HepG2 (cell line): ENCODE measurements at regions of chr14 and their contacts with region 1.

Region 1: GRCh38 chr14:91418387-91419043 is 895 bp upstream of the CCDC88C start:
- DNase-seq: peak; percentile 38
- ATAC-seq: peak; percentile 52
- H3K4me3 ChIP-seq: peak overlapping the region; percentile 27 to 78 (median 55)
- H3K27ac ChIP-seq: peak overlapping the region; percentile 62
- H3K4me1 ChIP-seq: peaks cover 64% of the 10 kb centered on the region
- H3K27me3 ChIP-seq: no peaks in the 10 kb centered on the region
- CTCF ChIP-seq: peak; percentile 90
- EP300 ChIP-seq: no peak
- POLR2A ChIP-seq: 0 out of 4 replicates have a peak, but pooled peaks of 1 of the 2 experiments have one; percentile 12
- RAD21 ChIP-seq: peak; percentile 83

Region 2: DNA sequence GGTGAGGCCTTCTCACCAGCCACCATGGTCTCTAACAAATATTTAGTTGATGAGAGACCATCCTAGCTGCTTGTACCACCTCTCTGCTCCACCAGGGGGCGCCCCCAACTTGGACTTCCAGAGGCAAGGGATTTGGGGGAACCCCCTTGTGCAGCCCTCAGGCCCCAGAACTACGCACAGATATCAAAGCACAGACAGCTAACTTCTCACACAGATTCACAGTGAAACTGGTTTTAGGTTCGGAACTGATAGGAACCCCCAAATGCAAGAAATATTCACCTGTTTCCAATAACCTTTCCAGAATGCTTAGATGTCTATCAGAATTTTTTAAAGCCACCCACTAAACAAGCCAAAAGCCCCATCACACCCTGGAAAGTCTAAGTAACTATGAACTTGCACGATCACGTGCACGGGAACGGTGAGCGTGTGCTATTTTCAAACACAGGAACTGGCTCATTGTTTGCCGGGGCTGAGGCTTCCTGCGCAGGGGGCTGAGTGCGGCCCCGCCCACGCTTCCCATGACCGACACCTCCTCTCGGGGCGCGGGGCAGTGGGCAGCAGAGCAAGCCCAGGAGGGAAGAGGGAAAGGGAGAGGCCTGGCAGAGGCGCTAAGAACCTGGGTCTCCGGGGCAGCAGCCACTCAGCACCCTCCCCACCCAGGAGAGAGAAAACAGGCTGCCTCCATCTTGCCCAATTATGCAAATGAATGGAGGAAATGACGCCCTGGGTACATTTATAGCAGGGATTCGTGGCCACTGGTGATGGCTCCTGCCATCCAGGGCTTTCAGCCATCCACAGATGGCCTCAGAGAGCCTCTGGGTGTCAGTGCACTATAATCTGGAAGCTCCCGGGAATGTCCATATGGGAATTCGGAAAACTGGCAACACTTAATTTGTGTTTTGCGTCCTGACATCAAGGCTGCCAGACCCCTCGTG is 94.6 kb before region 1 on chr14:
- CTCF ChIA-PET with region 1: interaction called, 39 read pairs
- POLR2A ChIA-PET with region 1: interaction called, 4 read pairs
- in situ Hi-C with region 1: loop called (anchors 5 kb)
- intact Hi-C with region 1: loop called (anchors 1 kb)
- DNase-seq: peak; percentile 45
- ATAC-seq: peak; percentile 71
- H3K4me3 ChIP-seq: no peak overlapping the region
- H3K27ac ChIP-seq: no peak overlapping the region
- H3K4me1 ChIP-seq: no peaks in the 10 kb centered on the region
- H3K27me3 ChIP-seq: no peaks in the 10 kb centered on the region
- CTCF ChIP-seq: peak; percentile 91
- EP300 ChIP-seq: no peak
- POLR2A ChIP-seq: no peak
- RAD21 ChIP-seq: peak; percentile 70

Region 3: GRCh38 chr14:91361233-91362063 is 57.1 kb before region 1 on chr14:
- CTCF ChIA-PET with region 1: no interaction called
- POLR2A ChIA-PET with region 1: interaction called, 3 read pairs
- in situ Hi-C with region 1: no loop called
- intact Hi-C with region 1: loop called (anchors 2 kb)
- DNase-seq: peak; percentile 61
- ATAC-seq: peak; percentile 75
- H3K4me3 ChIP-seq: peak overlapping the region in 1 of 3 experiments; percentile 53; a peak in 2 of 6 replicates
- H3K27ac ChIP-seq: peak overlapping the region; percentile 39
- H3K4me1 ChIP-seq: peaks cover 43% of the 10 kb centered on the region
- H3K27me3 ChIP-seq: no peaks in the 10 kb centered on the region
- CTCF ChIP-seq: no peak
- EP300 ChIP-seq: no peak
- POLR2A ChIP-seq: no peak
- RAD21 ChIP-seq: no peak

Region 4: GRCh38 chr14:91380610-91381371 is 37.7 kb before region 1 on chr14:
- CTCF ChIA-PET with region 1: no interaction called
- POLR2A ChIA-PET with region 1: no interaction called
- in situ Hi-C with region 1: no loop called
- intact Hi-C with region 1: loop called (anchors 2 kb)
- DNase-seq: no peak
- ATAC-seq: no peak
- H3K4me3 ChIP-seq: no peak overlapping the region
- H3K27ac ChIP-seq: no peak overlapping the region
- H3K4me1 ChIP-seq: peaks cover 25% of the 10 kb centered on the region
- H3K27me3 ChIP-seq: no peaks in the 10 kb centered on the region
- CTCF ChIP-seq: no peak
- EP300 ChIP-seq: no peak
- POLR2A ChIP-seq: no peak
- RAD21 ChIP-seq: no peak